K562 (cell line): ENCODE measurements at regions of chr17 and their contacts with region 1.

Region 1: GRCh38 chr17:40531051-40531991 is 29.9 kb upstream of the TNS4 start:
- DNase-seq: no peak
- ATAC-seq: no peak
- H3K4me3 ChIP-seq: no peak overlapping the region
- H3K27ac ChIP-seq: no peak overlapping the region
- H3K4me1 ChIP-seq: peaks cover 9 to 31% of the 10 kb centered on the region in 2 experiments
- H3K27me3 ChIP-seq: no peaks in the 10 kb centered on the region
- CTCF ChIP-seq: no peak
- EP300 ChIP-seq: no peak
- POLR2A ChIP-seq: no peak
- RAD21 ChIP-seq: no peak

Region 2: GRCh38 chr17:40399185-40399584 is 132.1 kb before region 1 on chr17:
- CTCF ChIA-PET with region 1: interaction called, 24 read pairs
- POLR2A ChIA-PET with region 1: interaction called, 4 read pairs
- in situ Hi-C with region 1: no loop called
- intact Hi-C with region 1: no loop called
- DNase-seq: peak; percentile 26 to 66 (median 38)
- ATAC-seq: peak; percentile 84
- H3K4me3 ChIP-seq: no peak overlapping the region
- H3K27ac ChIP-seq: no peak overlapping the region
- H3K4me1 ChIP-seq: no peaks in the 10 kb centered on the region
- H3K27me3 ChIP-seq: no peaks in the 10 kb centered on the region
- CTCF ChIP-seq: peak; percentile 32 to 58 (median 50); a peak in 5 of 6 replicates
- EP300 ChIP-seq: no peak
- POLR2A ChIP-seq: no peak
- RAD21 ChIP-seq: peak; percentile 38 to 52

Region 3: GRCh38 chr17:40410082-40410481 is 121.2 kb before region 1 on chr17:
- CTCF ChIA-PET with region 1: no interaction called
- POLR2A ChIA-PET with region 1: interaction called, 12 read pairs
- in situ Hi-C with region 1: no loop called
- intact Hi-C with region 1: no loop called
- DNase-seq: no peak
- ATAC-seq: no peak
- H3K4me3 ChIP-seq: no peak overlapping the region
- H3K27ac ChIP-seq: no peak overlapping the region
- H3K4me1 ChIP-seq: no peaks in the 10 kb centered on the region; a peak in 2 of 5 replicates
- H3K27me3 ChIP-seq: no peaks in the 10 kb centered on the region
- CTCF ChIP-seq: no peak
- EP300 ChIP-seq: no peak
- POLR2A ChIP-seq: no peak
- RAD21 ChIP-seq: no peak

Region 4: GRCh38 chr17:40417609-40418427 is 113.5 kb before region 1 on chr17 and contains the start of gene TOP2A:
- CTCF ChIA-PET with region 1: no interaction called
- POLR2A ChIA-PET with region 1: interaction called, 12 read pairs
- in situ Hi-C with region 1: no loop called
- intact Hi-C with region 1: no loop called
- DNase-seq: peak; percentile 100
- ATAC-seq: peak; percentile 94
- H3K4me3 ChIP-seq: peak within 1 kb of the TSS; percentile 74
- H3K27ac ChIP-seq: peak within 1 kb of the TSS; percentile 92
- H3K4me1 ChIP-seq: peaks cover 7 to 15% of the 10 kb centered on the region in 2 experiments
- H3K27me3 ChIP-seq: no peaks in the 10 kb centered on the region
- CTCF ChIP-seq: no peak
- EP300 ChIP-seq: 0 out of 2 replicates have a peak, but pooled peaks have one; percentile 23
- POLR2A ChIP-seq: peak; percentile 95
- RAD21 ChIP-seq: no peak
- polyA plus RNA-seq, gene TOP2A: 175 to 259 TPM

Region 5: GRCh38 chr17:40443583-40444327 is 87.6 kb before region 1 on chr17:
- CTCF ChIA-PET with region 1: interaction called, 15 read pairs
- POLR2A ChIA-PET with region 1: interaction called, 4 read pairs
- in situ Hi-C with region 1: no loop called
- intact Hi-C with region 1: loop called (anchors 1 kb)
- DNase-seq: peak; percentile 85 to 87 (median 86)
- ATAC-seq: peak; percentile 86
- H3K4me3 ChIP-seq: peak overlapping the region; percentile 44
- H3K27ac ChIP-seq: peak overlapping the region; percentile 80
- H3K4me1 ChIP-seq: peaks cover 32% of the 10 kb centered on the region in 2 experiments
- H3K27me3 ChIP-seq: no peaks in the 10 kb centered on the region
- CTCF ChIP-seq: peak; percentile 67 to 81 (median 70)
- EP300 ChIP-seq: no peak
- POLR2A ChIP-seq: no peak
- RAD21 ChIP-seq: peak; percentile 42 to 67

Region 6: DNA sequence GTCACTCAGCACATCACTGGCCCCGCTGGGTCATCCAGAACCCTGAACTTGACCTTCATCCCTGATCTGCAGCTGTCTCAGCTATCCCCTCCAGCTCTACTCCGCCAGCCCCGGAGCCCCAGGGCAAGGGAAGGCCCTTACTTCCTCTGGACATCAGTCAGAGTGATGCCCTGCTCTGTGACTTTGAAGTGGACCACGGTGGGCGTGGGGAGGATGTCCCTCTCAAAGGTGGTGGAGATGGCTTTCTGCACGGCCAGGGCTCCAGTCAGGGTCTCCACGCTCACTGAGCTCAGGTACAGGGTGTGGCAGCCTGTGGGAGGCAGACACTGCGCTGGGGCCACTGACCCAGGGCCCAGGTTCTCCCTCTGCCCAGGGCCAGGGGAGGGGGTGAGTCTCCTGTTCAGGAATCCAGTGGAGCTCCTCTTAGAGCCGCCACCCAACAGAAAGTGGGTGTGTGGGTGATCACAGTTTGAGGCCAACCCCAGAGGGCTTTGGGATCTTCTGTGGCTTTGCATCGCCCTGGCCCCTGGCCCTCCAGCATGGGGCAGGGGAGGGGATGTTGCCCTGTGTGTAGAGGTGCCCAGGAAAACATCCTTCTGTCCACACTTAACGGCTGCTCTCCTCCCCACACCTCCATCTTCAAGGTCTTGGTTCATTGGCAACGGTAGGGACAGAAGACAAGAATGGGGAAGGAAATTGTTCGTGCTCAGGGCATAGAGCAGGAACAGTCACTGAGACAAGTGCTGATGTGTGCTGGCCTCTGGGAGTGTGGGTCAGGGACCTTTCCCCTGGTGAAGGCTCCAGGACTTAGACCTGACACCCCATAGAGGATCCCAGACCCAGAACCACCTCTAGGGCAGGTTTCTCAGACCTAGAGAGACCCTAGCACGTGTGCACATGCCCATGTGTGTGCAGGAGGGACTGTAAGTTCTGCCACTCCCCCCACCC is 51.5 kb before region 1 on chr17:
- CTCF ChIA-PET with region 1: no interaction called
- POLR2A ChIA-PET with region 1: interaction called, 5 read pairs
- in situ Hi-C with region 1: no loop called
- intact Hi-C with region 1: loop called (anchors 2 kb)
- DNase-seq: no peak
- ATAC-seq: no peak
- H3K4me3 ChIP-seq: no peak overlapping the region
- H3K27ac ChIP-seq: no peak overlapping the region
- H3K4me1 ChIP-seq: peaks cover 19 to 41% of the 10 kb centered on the region in 2 experiments; a peak in 4 of 5 replicates
- H3K27me3 ChIP-seq: no peaks in the 10 kb centered on the region
- CTCF ChIP-seq: no peak
- EP300 ChIP-seq: no peak
- POLR2A ChIP-seq: no peak
- RAD21 ChIP-seq: no peak

Region 7: DNA sequence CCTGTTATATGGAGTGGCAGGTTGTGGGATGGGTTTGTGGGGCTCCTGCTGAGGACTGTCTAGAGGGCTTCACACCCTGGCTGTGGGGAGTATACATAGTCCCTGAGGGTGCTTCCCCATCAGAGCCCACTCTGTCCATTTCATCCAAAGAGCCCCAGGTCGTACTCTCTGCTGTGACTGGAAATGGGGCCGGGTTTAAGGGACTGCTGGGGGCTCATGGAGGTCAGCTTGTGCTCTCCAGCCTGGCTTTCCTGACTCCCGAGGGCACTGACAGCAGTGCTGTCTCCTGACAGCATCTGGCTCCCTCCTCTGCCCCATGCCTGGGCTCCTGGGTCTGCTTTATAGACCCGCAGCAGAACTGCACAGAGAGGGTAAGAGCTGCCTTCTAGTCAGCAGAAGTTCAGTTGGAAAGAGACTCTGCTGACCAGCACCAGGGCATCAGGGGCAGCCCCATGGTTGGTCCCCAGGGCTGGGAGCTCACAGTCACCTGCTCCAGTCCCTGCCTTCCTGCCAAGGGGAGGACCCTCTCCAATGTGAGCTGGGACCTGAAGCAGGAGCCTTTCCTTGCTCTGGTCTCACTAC is 12.1 kb before region 1 on chr17:
- CTCF ChIA-PET with region 1: no interaction called
- POLR2A ChIA-PET with region 1: interaction called, 11 read pairs
- in situ Hi-C with region 1: no loop called
- intact Hi-C with region 1: no loop called
- DNase-seq: no peak
- ATAC-seq: no peak
- H3K4me3 ChIP-seq: no peak overlapping the region
- H3K27ac ChIP-seq: no peak overlapping the region; the same call in 2 of the 3 replicates
- H3K4me1 ChIP-seq: peaks cover 19 to 40% of the 10 kb centered on the region in 2 experiments
- H3K27me3 ChIP-seq: no peaks in the 10 kb centered on the region
- CTCF ChIP-seq: no peak
- EP300 ChIP-seq: no peak
- POLR2A ChIP-seq: no peak
- RAD21 ChIP-seq: no peak